ENCODE measurements at regions of chr13 and their contacts with region 1.

Region 1: GRCh38 chr13:41916173-41916954 is 44.5 kb downstream of the VWA8 start:
- DNase-seq: peak; percentile 86
- H3K4me3 ChIP-seq: peak overlapping the region in 1 of 3 experiments; percentile 51
- H3K27ac ChIP-seq: peak overlapping the region; percentile 61
- H3K4me1 ChIP-seq: peaks cover 23% of the 10 kb centered on the region
- H3K27me3 ChIP-seq: no peaks in the 10 kb centered on the region
- CTCF ChIP-seq: no peak
- POLR2A ChIP-seq: no peak

Region 2: DNA sequence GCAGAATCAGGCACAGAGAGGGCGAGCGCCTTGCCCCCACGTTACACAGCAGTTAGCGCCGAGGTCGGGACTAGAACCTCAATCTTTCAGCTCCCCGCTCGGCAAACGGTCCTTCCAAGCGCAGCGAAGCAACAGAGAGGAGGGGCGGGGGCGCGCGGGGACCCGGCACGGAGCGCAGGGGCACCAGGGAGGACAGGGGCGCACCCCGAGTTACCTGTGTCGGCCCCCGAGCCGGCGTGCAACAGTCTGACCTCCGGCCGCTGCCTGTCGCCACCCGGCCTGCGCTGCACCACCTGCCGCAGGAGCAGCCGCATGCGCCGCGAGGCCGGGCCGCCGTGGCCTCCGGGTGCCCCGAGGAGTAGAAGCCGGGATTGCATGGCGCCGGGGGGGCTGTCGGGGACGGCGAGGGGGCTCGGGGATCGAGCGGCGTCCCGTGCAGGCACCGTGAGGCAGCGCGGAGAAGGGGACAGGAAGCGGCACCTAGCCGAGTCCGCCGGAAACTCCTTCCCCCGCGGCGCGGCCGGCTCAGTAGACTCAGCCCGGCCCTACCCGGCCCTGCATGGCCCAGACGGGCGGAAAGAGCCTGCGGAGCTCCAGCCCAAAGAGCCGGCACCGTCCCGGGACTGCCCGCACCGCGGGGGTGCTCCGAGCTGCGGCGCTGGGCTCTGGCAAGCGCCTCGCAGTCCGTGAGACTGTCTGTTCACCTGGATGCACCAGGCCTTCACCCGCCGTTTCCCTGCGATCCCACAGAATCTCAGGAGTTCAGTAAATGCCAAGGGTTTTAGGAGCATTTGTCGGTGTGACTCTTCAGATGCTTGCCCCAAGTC is 44.5 kb after region 1 on chr13 and contains the start of gene VWA8:
- CTCF ChIA-PET with region 1: no interaction called
- POLR2A ChIA-PET with region 1: no interaction called
- dilution Hi-C with region 1: no loop called
- intact Hi-C with region 1: loop called (anchors 5 kb)
- DNase-seq: peak; percentile 60
- H3K4me3 ChIP-seq: peak within 1 kb of the TSS; percentile 52 to 61 (median 54)
- H3K27ac ChIP-seq: peak within 1 kb of the TSS; percentile 2
- H3K4me1 ChIP-seq: peaks cover 8% of the 10 kb centered on the region
- H3K27me3 ChIP-seq: no peaks in the 10 kb centered on the region
- CTCF ChIP-seq: no peak
- POLR2A ChIP-seq: no peak
- total RNA-seq, gene VWA8: 11.3 and 12.7 TPM in 2 replicates

Measured in endothelial cell of umbilical vein (primary cell).